ENCODE measurements at regions of chr7 and their contacts with region 1.

Region 1: DNA sequence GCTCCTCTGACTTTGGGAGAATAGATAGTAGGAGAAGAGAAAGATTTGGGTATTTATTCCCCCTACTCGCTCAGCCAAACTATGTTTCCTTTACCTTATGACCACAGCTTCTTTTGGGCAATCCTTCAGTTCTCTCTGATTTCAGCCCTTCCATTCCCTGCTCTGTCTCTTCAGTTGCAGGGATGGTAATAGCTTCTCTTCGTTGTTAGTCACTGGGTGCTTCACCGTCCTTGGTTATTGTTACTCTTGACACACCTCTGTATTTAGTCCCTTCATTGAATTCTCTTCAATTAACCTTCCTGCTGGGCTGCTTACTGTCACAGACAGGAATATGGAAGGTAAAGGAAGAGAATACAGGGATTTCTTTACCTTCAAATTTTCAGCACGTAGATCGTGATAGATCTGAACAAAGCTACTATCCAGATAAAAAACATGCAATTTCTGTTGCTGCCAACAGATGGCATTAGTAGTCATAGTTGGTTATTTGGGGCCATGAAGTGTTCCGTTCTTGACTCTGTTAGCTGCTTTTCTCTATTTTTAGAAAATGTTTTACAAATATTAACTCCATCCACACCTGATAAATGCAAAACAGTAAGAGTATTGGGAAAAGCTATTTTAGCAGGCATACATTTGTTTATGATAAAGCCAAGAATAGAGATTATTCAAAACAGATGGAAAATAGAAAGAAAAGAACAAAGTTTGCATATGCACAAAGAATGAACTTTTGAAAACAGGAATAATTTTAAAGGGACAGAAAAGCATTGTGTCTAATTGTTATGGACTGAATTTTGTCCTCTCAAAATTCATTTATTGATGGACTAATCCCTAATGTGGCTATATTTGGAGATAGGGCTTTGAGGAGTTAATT is 14.0 kb upstream of the PTTG1IP2 start:
- DNase-seq: peak; percentile 67
- ATAC-seq: peak; percentile 74
- H3K4me3 ChIP-seq: peak overlapping the region in 1 of 5 experiments; percentile 23
- H3K4me3 Mint-ChIP-seq: peak overlapping the region; percentile 69
- H3K27ac ChIP-seq: no peak overlapping the region
- H3K27ac Mint-ChIP-seq: peak overlapping the region; percentile 48
- H3K4me1 ChIP-seq: peaks cover 5 to 8% of the 10 kb centered on the region in 2 donors
- H3K4me1 Mint-ChIP-seq: peaks cover 7% of the 10 kb centered on the region
- H3K27me3 ChIP-seq: peaks cover 0 to 3% (median 0%) of the 10 kb centered on the region in 4 experiments
- H3K27me3 Mint-ChIP-seq: peaks cover 10% of the 10 kb centered on the region
- CTCF ChIP-seq: peak; percentile 83

Region 2: DNA sequence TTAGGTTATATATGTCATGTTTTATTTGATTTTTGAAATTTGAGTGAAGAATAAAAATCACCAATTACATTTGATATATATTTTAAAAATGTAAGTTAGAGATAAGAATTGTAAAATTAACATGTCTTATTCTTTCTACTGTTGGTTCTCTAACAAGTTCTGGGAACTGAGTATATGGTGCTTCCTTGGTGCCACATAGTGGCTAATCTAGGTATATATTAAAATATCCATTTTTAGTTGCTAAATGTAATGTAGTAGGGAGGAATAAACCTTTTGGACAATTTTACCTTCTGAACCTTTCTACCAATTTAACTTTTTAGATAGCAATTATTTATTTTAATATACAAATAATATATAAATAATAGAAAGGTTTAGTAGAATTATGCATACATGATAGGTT is 193.0 kb before region 1 on chr7:
- CTCF ChIA-PET with region 1: no interaction called
- POLR2A ChIA-PET with region 1: no interaction called
- intact Hi-C with region 1: no loop called
- DNase-seq: peak; percentile 14
- ATAC-seq: peak; percentile 43
- H3K4me3 ChIP-seq: no peak overlapping the region
- H3K4me3 Mint-ChIP-seq: no peak overlapping the region
- H3K27ac ChIP-seq: no peak overlapping the region
- H3K27ac Mint-ChIP-seq: no peak overlapping the region
- H3K4me1 ChIP-seq: no peaks in the 10 kb centered on the region
- H3K4me1 Mint-ChIP-seq: no peaks in the 10 kb centered on the region
- H3K27me3 ChIP-seq: no peaks in the 10 kb centered on the region
- H3K27me3 Mint-ChIP-seq: peaks cover 18% of the 10 kb centered on the region
- CTCF ChIP-seq: peak; percentile 69

Region 3: GRCh38 chr7:90424720-90425119 is 30.7 kb before region 1 on chr7:
- CTCF ChIA-PET with region 1: interaction called, 12 read pairs
- POLR2A ChIA-PET with region 1: no interaction called
- intact Hi-C with region 1: no loop called
- DNase-seq: no peak
- ATAC-seq: no peak
- H3K4me3 ChIP-seq: no peak overlapping the region
- H3K4me3 Mint-ChIP-seq: no peak overlapping the region
- H3K27ac ChIP-seq: no peak overlapping the region
- H3K27ac Mint-ChIP-seq: no peak overlapping the region
- H3K4me1 ChIP-seq: no peaks in the 10 kb centered on the region
- H3K4me1 Mint-ChIP-seq: no peaks in the 10 kb centered on the region
- H3K27me3 ChIP-seq: no peaks in the 10 kb centered on the region
- H3K27me3 Mint-ChIP-seq: peaks cover 3% of the 10 kb centered on the region
- CTCF ChIP-seq: no peak

Region 4: DNA sequence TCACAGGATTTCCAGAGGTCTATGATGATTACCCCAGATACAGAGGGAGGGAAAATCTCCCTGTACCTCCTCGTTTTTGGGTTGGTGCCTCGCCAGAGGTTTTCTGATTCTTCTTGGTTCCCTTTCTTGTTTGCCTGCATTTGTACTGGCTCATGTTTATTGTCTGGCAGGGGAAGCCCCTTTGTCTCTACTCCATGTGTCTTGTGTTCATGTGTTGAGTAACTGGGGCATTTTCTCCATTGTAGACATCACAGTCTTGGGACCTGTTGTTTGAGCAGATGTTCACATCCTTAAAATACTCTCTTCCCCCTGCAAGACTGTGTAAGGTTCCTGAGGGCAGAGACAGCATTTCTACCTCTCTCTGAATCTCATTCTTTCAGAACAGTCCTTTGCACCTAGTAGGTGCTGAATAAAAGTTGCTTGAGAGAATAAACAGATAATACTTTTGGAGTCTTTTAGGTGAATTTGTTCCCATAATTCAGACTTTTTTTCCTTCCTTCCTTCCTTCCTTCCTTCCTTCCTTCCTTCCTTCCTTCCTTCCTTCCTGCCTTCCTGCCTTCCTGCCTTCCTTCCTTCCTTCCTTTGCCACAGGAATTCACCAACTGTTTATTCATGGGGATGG is 165.8 kb after region 1 on chr7:
- CTCF ChIA-PET with region 1: interaction called, 12 read pairs
- POLR2A ChIA-PET with region 1: no interaction called
- intact Hi-C with region 1: no loop called
- DNase-seq: no peak
- ATAC-seq: peak; percentile 24
- H3K4me3 ChIP-seq: no peak overlapping the region
- H3K4me3 Mint-ChIP-seq: no peak overlapping the region
- H3K27ac ChIP-seq: no peak overlapping the region
- H3K27ac Mint-ChIP-seq: no peak overlapping the region
- H3K4me1 ChIP-seq: peaks cover 9 to 15% of the 10 kb centered on the region in 2 donors
- H3K4me1 Mint-ChIP-seq: peaks cover 30% of the 10 kb centered on the region
- H3K27me3 ChIP-seq: no peaks in the 10 kb centered on the region
- H3K27me3 Mint-ChIP-seq: no peaks in the 10 kb centered on the region
- CTCF ChIP-seq: no peak

Region 5: GRCh38 chr7:90629297-90629918 is 174.0 kb after region 1 on chr7:
- CTCF ChIA-PET with region 1: interaction called, 75 read pairs
- POLR2A ChIA-PET with region 1: no interaction called
- intact Hi-C with region 1: loop called (anchors 1 kb)
- DNase-seq: peak; percentile 75
- ATAC-seq: peak; percentile 86
- H3K4me3 ChIP-seq: no peak overlapping the region
- H3K4me3 Mint-ChIP-seq: no peak overlapping the region
- H3K27ac ChIP-seq: no peak overlapping the region
- H3K27ac Mint-ChIP-seq: no peak overlapping the region
- H3K4me1 ChIP-seq: no peaks in the 10 kb centered on the region
- H3K4me1 Mint-ChIP-seq: peaks cover 13% of the 10 kb centered on the region
- H3K27me3 ChIP-seq: no peaks in the 10 kb centered on the region
- H3K27me3 Mint-ChIP-seq: no peaks in the 10 kb centered on the region
- CTCF ChIP-seq: peak; percentile 75

Region 6: GRCh38 chr7:90749262-90749661 is 293.9 kb after region 1 on chr7:
- CTCF ChIA-PET with region 1: interaction called, 11 read pairs
- POLR2A ChIA-PET with region 1: no interaction called
- intact Hi-C with region 1: no loop called
- DNase-seq: no peak
- ATAC-seq: no peak
- H3K4me3 ChIP-seq: no peak overlapping the region
- H3K4me3 Mint-ChIP-seq: peak overlapping the region; percentile 52
- H3K27ac ChIP-seq: no peak overlapping the region
- H3K27ac Mint-ChIP-seq: peak overlapping the region; percentile 54
- H3K4me1 ChIP-seq: peaks cover 15 to 24% of the 10 kb centered on the region in 2 donors
- H3K4me1 Mint-ChIP-seq: peaks cover 66% of the 10 kb centered on the region
- H3K27me3 ChIP-seq: no peaks in the 10 kb centered on the region
- H3K27me3 Mint-ChIP-seq: no peaks in the 10 kb centered on the region
- CTCF ChIP-seq: no peak

Region 7: DNA sequence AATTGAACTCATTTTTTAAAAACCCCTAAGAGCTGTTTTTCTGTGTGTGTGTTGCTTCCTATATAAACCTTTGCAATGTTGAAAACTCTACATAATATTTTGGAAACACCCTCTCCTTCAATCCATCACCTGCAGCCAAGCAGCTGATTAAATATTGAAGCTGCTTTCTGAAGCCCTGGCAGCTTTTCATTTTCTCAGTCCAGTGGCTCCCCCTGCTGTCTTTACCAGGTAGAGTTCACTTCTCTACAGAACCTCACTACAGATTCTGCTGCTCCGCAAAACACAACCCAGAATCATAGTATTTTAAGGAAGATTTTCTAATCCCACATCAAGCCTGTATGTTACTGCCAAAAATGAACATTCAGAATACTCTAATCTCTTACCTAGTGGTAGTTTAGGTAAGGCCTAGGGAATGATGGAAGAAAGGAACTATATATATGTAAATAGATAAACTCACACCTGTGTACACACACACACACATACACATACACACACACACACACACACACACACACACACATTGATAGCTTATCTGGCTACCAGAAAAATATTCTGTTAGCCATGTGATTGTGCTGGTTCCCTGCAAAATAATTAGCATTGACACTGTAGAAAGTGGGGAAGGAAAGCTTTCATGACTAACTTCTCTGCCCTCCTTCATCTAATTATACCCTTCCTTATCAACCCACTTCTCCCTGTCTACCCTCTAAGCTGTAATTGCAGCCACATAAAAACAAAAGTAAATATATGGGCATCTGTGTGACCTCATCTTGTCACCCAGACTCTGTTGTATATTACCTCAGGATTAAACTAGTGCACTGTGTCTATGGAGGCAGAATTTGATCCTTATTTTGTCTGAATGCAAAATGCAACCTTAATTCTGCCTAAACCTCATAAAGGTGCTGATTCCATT is 579.3 kb after region 1 on chr7:
- CTCF ChIA-PET with region 1: interaction called, 39 read pairs
- POLR2A ChIA-PET with region 1: no interaction called
- intact Hi-C with region 1: loop called (anchors 1 kb)
- DNase-seq: peak; percentile 56
- ATAC-seq: no peak
- H3K4me3 ChIP-seq: no peak overlapping the region
- H3K4me3 Mint-ChIP-seq: no peak overlapping the region
- H3K27ac ChIP-seq: no peak overlapping the region
- H3K27ac Mint-ChIP-seq: no peak overlapping the region
- H3K4me1 ChIP-seq: no peaks in the 10 kb centered on the region
- H3K4me1 Mint-ChIP-seq: peaks cover 6% of the 10 kb centered on the region
- H3K27me3 ChIP-seq: no peaks in the 10 kb centered on the region
- H3K27me3 Mint-ChIP-seq: no peaks in the 10 kb centered on the region
- CTCF ChIP-seq: peak; percentile 68